ENCODE measurements at regions of chr4 and their contacts with region 1.

Region 1: GRCh38 chr4:67746797-67747495 is 7.2 kb downstream of the GNRHR start:
- DNase-seq: peak; percentile 52
- H3K4me3 ChIP-seq: no peak overlapping the region
- H3K27ac ChIP-seq: no peak overlapping the region
- H3K4me1 ChIP-seq: no peaks in the 10 kb centered on the region
- H3K27me3 ChIP-seq: no peaks in the 10 kb centered on the region
- CTCF ChIP-seq: peak; percentile 31 to 38
- POLR2A ChIP-seq: no peak

Region 2: DNA sequence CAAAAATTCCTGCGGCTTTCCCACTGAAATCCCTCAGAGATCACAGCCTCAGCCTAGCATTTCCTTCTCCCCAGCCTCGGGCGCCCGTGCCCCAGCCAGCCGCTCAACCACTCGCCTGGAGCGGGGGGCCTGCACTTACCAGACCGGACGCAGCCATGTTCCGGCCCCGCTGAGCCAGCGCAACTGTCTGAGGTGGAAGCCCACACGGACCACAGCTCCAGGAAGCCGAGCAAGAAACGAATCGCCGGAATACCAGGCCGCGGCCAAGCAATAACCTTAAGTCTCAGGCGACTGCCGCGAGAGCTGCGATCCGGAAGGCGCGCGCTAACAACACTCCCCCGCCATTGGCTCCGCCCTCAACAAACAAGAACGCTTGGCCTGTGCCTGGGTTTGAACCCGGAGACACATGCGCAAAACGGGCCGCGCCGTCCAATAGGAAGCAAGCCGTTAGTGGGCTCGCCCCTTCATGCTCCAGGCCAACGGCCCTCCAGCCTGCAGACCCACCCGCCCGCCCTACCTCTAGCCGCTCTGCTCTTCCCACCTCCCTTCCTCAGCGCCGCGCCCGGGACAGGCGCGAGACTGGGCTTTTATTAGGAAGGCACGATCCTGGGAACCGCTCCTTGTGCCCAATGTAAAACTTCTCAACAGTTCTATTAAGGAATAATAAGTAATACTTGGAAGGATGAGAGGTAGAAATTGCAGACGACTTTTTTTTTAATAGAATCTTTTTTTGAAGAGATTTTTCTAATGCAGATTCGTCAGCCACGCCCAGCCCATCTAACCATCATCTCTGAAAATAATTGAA is 201.5 kb before region 1 on chr4 and contains the start of gene CENPC:
- CTCF ChIA-PET with region 1: interaction called, 5 read pairs
- POLR2A ChIA-PET with region 1: no interaction called
- dilution Hi-C with region 1: no loop called
- intact Hi-C with region 1: loop called (anchors 5 kb)
- DNase-seq: peak; percentile 99
- H3K4me3 ChIP-seq: peak within 1 kb of the TSS; percentile 87 to 100 (median 100)
- H3K27ac ChIP-seq: peak within 1 kb of the TSS; percentile 99
- H3K4me1 ChIP-seq: peaks cover 13% of the 10 kb centered on the region
- H3K27me3 ChIP-seq: no peaks in the 10 kb centered on the region
- CTCF ChIP-seq: no peak
- POLR2A ChIP-seq: peak; percentile 96
- total RNA-seq, gene CENPC: 24.5 and 26.4 TPM in 2 replicates

Region 3: DNA sequence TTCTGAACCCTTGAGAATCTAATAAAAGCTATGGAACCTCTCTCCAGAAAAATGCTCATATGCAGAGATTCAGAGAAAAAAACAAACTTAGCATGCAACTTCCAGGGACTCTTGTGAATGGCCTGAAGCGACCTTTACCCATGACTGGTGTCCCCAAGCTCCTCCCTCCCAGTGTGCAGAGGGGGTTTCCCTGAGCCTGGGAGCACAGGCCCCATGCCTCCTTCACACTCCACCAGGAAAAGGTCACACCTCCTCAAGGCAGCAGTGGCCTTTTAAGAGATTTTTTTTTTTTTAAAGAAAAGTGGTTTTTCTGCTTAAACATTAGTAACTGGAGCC is 32.7 kb before region 1 on chr4:
- CTCF ChIA-PET with region 1: interaction called, 15 read pairs
- POLR2A ChIA-PET with region 1: no interaction called
- dilution Hi-C with region 1: no loop called
- intact Hi-C with region 1: no loop called
- DNase-seq: no peak
- H3K4me3 ChIP-seq: no peak overlapping the region
- H3K27ac ChIP-seq: peak overlapping the region; percentile 69
- H3K4me1 ChIP-seq: peaks cover 14% of the 10 kb centered on the region
- H3K27me3 ChIP-seq: no peaks in the 10 kb centered on the region
- CTCF ChIP-seq: no peak
- POLR2A ChIP-seq: no peak

Region 4: GRCh38 chr4:67736262-67736661 is 10.7 kb before region 1 on chr4:
- CTCF ChIA-PET with region 1: interaction called, 31 read pairs
- POLR2A ChIA-PET with region 1: no interaction called
- dilution Hi-C with region 1: no loop called
- intact Hi-C with region 1: no loop called
- DNase-seq: no peak
- H3K4me3 ChIP-seq: no peak overlapping the region
- H3K27ac ChIP-seq: no peak overlapping the region
- H3K4me1 ChIP-seq: no peaks in the 10 kb centered on the region
- H3K27me3 ChIP-seq: no peaks in the 10 kb centered on the region
- CTCF ChIP-seq: no peak
- POLR2A ChIP-seq: no peak

Region 5: DNA sequence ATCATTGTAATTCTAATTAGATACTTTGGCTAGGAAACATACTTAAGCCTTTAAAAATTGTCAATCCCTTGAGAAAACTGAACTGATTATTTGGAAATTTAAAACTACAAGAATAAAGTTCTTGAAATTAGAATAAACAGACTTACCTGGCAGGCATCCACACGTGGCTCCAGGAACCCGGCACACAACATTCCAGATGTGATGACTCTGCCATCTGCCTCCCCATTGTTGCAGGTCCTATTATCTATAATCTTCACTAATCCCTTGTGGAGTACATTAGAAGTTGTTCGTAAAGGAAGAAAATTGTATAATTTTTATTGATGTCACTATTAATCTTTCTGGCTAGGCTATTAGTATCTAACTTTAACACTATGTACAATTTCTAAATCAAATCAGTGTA is 23.5 kb after region 1 on chr4:
- CTCF ChIA-PET with region 1: interaction called, 16 read pairs
- POLR2A ChIA-PET with region 1: no interaction called
- dilution Hi-C with region 1: no loop called
- intact Hi-C with region 1: no loop called
- DNase-seq: no peak
- H3K4me3 ChIP-seq: no peak overlapping the region
- H3K27ac ChIP-seq: no peak overlapping the region
- H3K4me1 ChIP-seq: no peaks in the 10 kb centered on the region
- H3K27me3 ChIP-seq: no peaks in the 10 kb centered on the region
- CTCF ChIP-seq: no peak
- POLR2A ChIP-seq: no peak

Region 6: GRCh38 chr4:68175562-68176155 is 428.7 kb after region 1 on chr4:
- CTCF ChIA-PET with region 1: interaction called, 22 read pairs
- POLR2A ChIA-PET with region 1: no interaction called
- dilution Hi-C with region 1: no loop called
- intact Hi-C with region 1: loop called (anchors 1 kb)
- DNase-seq: peak; percentile 67
- H3K4me3 ChIP-seq: no peak overlapping the region
- H3K27ac ChIP-seq: no peak overlapping the region
- H3K4me1 ChIP-seq: no peaks in the 10 kb centered on the region
- H3K27me3 ChIP-seq: no peaks in the 10 kb centered on the region
- CTCF ChIP-seq: peak; percentile 23 to 39
- POLR2A ChIP-seq: no peak

Measured in endothelial cell of umbilical vein (primary cell).